ENCODE measurements at regions of chr1 and their contacts with region 1.

Region 1: GRCh38 chr1:116826818-116827606 is 72.8 kb downstream of the CD2 start:
- DNase-seq: peak; percentile 90
- H3K4me3 Mint-ChIP-seq: peak overlapping the region; percentile 79
- H3K27ac Mint-ChIP-seq: peak overlapping the region; percentile 91
- H3K4me1 Mint-ChIP-seq: peaks cover 77% of the 10 kb centered on the region
- H3K27me3 Mint-ChIP-seq: no peaks in the 10 kb centered on the region

Region 2: DNA sequence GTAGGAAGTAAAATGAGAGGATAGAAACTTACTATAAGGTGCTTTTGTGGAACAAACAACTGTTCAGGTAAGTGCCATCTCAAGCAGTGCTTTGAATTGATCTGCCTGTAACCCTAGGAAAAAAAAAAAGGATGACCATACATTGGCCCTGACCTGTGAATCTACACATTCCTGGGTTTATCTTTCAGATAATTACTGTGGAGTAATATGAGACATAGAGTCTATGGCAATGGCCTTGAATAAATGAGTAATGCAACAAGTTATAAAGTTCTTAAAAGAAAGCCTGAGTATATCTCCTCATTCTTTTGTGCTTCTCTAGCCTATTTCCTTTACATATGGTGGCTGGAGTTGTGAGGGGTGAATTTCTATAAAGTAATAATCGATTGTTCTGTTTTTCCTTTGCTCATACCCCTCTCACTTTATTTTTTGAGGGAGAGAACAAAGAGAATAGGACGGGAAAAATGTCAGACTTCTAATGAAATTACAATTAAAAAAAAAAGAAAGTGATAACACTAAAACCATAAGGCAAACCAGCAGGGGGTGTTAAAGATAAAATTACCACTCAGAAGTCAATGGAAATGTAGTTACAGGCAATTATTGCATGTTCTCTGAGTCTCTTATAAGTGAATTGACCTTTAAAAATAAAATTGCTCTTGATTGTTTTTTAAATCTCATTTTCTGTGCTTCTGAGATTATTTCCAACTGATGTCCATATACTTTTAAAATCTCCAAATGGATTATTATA is 466.4 kb before region 1 on chr1:
- CTCF ChIA-PET with region 1: no interaction called
- POLR2A ChIA-PET with region 1: no interaction called
- intact Hi-C with region 1: no loop called
- DNase-seq: no peak
- H3K4me3 Mint-ChIP-seq: no peak overlapping the region
- H3K27ac Mint-ChIP-seq: no peak overlapping the region
- H3K4me1 Mint-ChIP-seq: peaks cover 11% of the 10 kb centered on the region
- H3K27me3 Mint-ChIP-seq: no peaks in the 10 kb centered on the region

Region 3: DNA sequence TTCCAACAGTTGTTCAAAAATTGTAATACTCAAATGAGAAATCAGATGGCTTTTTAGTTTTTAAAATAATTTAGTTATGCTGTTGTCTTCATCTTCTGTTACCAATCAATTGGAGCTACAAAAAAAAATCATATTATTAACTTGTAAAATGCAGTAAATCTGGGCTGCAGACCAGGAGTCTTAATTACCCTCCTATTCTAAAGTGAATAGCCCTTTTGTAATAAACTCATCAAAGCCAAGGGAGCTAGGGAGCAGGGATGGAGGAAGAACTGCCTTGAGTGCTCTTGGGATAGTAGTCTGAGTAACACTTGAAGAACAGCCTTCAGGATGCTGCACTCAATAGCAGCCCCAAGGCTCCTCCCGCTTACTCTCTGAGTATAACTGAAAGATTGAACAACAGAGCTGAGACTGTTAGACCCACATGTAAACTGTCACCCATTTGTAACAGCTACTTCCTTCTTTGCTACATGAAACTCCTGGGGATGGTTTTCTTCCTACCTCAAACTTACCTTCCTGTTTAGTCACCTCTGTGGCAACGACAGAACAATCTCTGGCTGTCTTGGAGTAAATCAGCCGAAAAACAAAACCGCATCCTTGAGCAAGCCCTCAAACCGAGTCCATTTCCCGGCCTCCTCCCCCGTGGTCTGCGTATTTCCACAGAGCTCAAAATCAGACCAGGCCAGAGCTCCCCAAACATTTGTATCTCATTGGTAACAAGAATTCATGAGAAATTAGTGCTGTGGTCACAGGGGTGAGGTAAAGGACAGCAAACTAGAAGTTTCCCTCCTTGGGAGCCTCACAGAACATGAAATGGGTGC is 312.1 kb before region 1 on chr1:
- CTCF ChIA-PET with region 1: no interaction called
- POLR2A ChIA-PET with region 1: no interaction called
- intact Hi-C with region 1: loop called (anchors 2 kb)
- DNase-seq: peak; percentile 88
- H3K4me3 Mint-ChIP-seq: peak overlapping the region; percentile 55
- H3K27ac Mint-ChIP-seq: peak overlapping the region; percentile 96
- H3K4me1 Mint-ChIP-seq: peaks cover 63% of the 10 kb centered on the region
- H3K27me3 Mint-ChIP-seq: no peaks in the 10 kb centered on the region

Region 4: DNA sequence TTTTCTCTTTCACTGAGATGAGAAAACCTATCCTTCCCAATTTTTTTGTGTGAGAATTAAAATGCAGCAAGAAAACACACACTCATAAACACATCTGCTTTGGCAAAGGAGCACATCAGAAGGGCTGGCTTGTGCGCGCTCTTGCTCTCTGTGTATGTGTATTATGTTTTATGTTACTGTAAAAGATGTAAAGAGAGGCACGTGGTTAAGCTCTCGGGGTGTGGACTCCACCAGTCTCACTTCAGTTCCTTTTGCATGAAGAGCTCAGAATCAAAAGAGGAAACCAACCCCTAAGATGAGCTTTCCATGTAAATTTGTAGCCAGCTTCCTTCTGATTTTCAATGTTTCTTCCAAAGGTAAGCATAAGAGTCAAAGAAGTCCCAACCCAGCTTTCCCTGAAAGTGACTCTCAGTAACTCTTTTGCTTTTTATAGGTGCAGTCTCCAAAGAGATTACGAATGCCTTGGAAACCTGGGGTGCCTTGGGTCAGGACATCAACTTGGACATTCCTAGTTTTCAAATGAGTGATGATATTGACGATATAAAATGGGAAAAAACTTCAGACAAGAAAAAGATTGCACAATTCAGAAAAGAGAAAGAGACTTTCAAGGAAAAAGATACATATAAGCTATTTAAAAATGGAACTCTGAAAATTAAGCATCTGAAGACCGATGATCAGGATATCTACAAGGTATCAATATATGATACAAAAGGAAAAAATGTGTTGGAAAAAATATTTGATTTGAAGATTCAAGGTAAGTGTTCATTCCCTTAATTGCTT is 72.6 kb before region 1 on chr1 and contains the start of gene CD2:
- CTCF ChIA-PET with region 1: interaction called, 3 read pairs
- POLR2A ChIA-PET with region 1: interaction called, 10 read pairs
- intact Hi-C with region 1: no loop called
- DNase-seq: peak; percentile 78
- H3K4me3 Mint-ChIP-seq: peak within 1 kb of the TSS; percentile 99
- H3K27ac Mint-ChIP-seq: peak within 1 kb of the TSS; percentile 99
- H3K4me1 Mint-ChIP-seq: peaks cover 40% of the 10 kb centered on the region
- H3K27me3 Mint-ChIP-seq: no peaks in the 10 kb centered on the region
- total RNA-seq, gene CD2: 335 to 355 TPM

Region 5: DNA sequence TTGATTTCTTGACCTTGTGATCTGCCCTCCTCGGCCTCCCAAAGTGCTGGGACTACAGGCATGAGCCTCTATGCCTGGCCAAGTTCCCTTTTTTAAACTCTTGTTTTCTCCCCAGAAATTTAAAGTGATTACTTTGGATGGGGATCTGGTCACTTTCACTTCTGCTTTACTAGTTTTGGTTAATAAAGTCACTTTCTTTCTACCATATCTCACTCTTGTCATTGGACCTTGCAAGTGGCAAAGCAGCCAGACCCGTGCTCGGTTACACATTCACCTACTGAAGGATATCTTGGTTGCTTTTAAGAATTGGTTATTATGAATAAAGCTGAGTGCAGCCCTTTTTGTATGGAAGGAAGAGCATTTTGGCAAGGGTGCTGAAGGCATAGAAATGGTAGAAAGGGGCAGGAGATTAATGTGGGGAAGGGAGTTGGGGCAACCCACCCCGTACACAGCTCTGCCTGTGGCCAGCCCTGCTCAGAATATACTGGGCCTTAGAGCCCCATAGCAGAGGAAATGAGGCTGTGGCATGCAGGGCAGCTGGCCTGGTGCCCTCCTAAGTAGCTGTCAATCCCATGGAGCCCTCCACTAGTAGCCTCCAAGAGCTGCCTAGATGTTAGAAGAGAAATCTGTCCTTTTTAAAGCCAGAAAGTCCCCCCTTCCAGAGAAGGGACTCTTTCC is 32.1 kb before region 1 on chr1:
- CTCF ChIA-PET with region 1: no interaction called
- POLR2A ChIA-PET with region 1: interaction called, 13 read pairs
- intact Hi-C with region 1: no loop called
- DNase-seq: no peak
- H3K4me3 Mint-ChIP-seq: no peak overlapping the region
- H3K27ac Mint-ChIP-seq: peak overlapping the region; percentile 40
- H3K4me1 Mint-ChIP-seq: peaks cover 66% of the 10 kb centered on the region
- H3K27me3 Mint-ChIP-seq: no peaks in the 10 kb centered on the region

Region 6: GRCh38 chr1:116881879-116882520 is 55.0 kb after region 1 on chr1:
- CTCF ChIA-PET with region 1: interaction called, 12 read pairs
- POLR2A ChIA-PET with region 1: interaction called, 4 read pairs
- intact Hi-C with region 1: loop called (anchors 1 kb)
- DNase-seq: peak; percentile 66
- H3K4me3 Mint-ChIP-seq: no peak overlapping the region
- H3K27ac Mint-ChIP-seq: no peak overlapping the region
- H3K4me1 Mint-ChIP-seq: peaks cover 19% of the 10 kb centered on the region
- H3K27me3 Mint-ChIP-seq: no peaks in the 10 kb centered on the region

Measured in activated CD4-positive, alpha-beta memory T cell treated with anti-CD3 and anti-CD28 coated beads for 36 hours (primary cell).